Ascending aorta (tissue), 2 donors: ENCODE measurements at regions of chr4 and their contacts with region 1.

Region 1: GRCh38 chr4:46329118-46329976 is 60.6 kb downstream of the GABRA2 start:
- DNase-seq: no peak
- H3K4me3 ChIP-seq: no peak overlapping the region
- H3K27ac ChIP-seq: no peak overlapping the region
- H3K4me1 ChIP-seq: no peaks in the 10 kb centered on the region
- H3K27me3 ChIP-seq: no peaks in the 10 kb centered on the region
- CTCF ChIP-seq: no peak

Region 2: GRCh38 chr4:45946699-45947098 is 382.6 kb before region 1 on chr4:
- intact Hi-C with region 1: loop called (anchors 5 kb)
- DNase-seq: no peak
- H3K4me3 ChIP-seq: no peak overlapping the region
- H3K27ac ChIP-seq: no peak overlapping the region
- H3K4me1 ChIP-seq: no peaks in the 10 kb centered on the region
- H3K27me3 ChIP-seq: no peaks in the 10 kb centered on the region
- CTCF ChIP-seq: no peak

Region 3: GRCh38 chr4:46270986-46271596 is 58.3 kb before region 1 on chr4:
- intact Hi-C with region 1: no loop called
- DNase-seq: no peak
- H3K4me3 ChIP-seq: no peak overlapping the region
- H3K27ac ChIP-seq: no peak overlapping the region
- H3K4me1 ChIP-seq: no peaks in the 10 kb centered on the region
- H3K27me3 ChIP-seq: no peaks in the 10 kb centered on the region
- CTCF ChIP-seq: peak in 1 of 3 experiments; percentile 11